ENCODE measurements at regions of chr14 and their contacts with region 1.

Region 1: GRCh38 chr14:99838639-99839303 is 45.6 kb downstream of the EML1 start:
- DNase-seq: peak in 1 of 2 experiments; percentile 67
- H3K4me3 ChIP-seq: peak overlapping the region in 1 of 4 experiments; percentile 34; a peak in 4 of 8 replicates
- H3K27ac ChIP-seq: no peak overlapping the region
- H3K4me1 ChIP-seq: peaks cover 2 to 15% (median 9%) of the 10 kb centered on the region in 4 experiments; a peak in 6 of 7 replicates
- H3K27me3 ChIP-seq: no peaks in the 10 kb centered on the region
- CTCF ChIP-seq: no peak
- EP300 ChIP-seq: peak in 1 of 2 experiments; percentile 59; a peak in 1 of 3 replicates
- POLR2A ChIP-seq: no peak
- RAD21 ChIP-seq: no peak

Region 2: GRCh38 chr14:99853206-99853605 is 14.4 kb after region 1 on chr14:
- CTCF ChIA-PET with region 1: interaction called, 25 read pairs
- POLR2A ChIA-PET with region 1: interaction called, 3 read pairs
- DNase-seq: no peak
- H3K4me3 ChIP-seq: no peak overlapping the region
- H3K27ac ChIP-seq: no peak overlapping the region
- H3K4me1 ChIP-seq: no peaks in the 10 kb centered on the region
- H3K27me3 ChIP-seq: no peaks in the 10 kb centered on the region
- CTCF ChIP-seq: no peak
- EP300 ChIP-seq: no peak
- POLR2A ChIP-seq: no peak
- RAD21 ChIP-seq: no peak

Region 3: GRCh38 chr14:99910337-99911309 is 71.9 kb after region 1 on chr14:
- CTCF ChIA-PET with region 1: no interaction called
- POLR2A ChIA-PET with region 1: no interaction called
- DNase-seq: no peak
- H3K4me3 ChIP-seq: no peak overlapping the region
- H3K27ac ChIP-seq: no peak overlapping the region
- H3K4me1 ChIP-seq: no peaks in the 10 kb centered on the region
- H3K27me3 ChIP-seq: no peaks in the 10 kb centered on the region
- CTCF ChIP-seq: no peak
- EP300 ChIP-seq: no peak
- POLR2A ChIP-seq: no peak
- RAD21 ChIP-seq: no peak

Measured in H1 (cell line).